A549 (cell line): ENCODE measurements at regions of chr20 and their contacts with region 1.

Region 1: GRCh38 chr20:52083627-52084232 is 107.8 kb downstream of the ZFP64 start:
- DNase-seq: peak; percentile 63 to 69
- ATAC-seq: peak; percentile 79 to 88
- H3K4me3 ChIP-seq: no peak overlapping the region
- H3K27ac ChIP-seq: no peak overlapping the region
- H3K4me1 ChIP-seq: 0 out of 3 replicates have a peak, but pooled peaks cover 3% of the 10 kb centered on the region
- CTCF ChIP-seq: peak; percentile 80
- EP300 ChIP-seq: no peak
- POLR2A ChIP-seq: no peak
- RAD21 ChIP-seq: peak; percentile 93 to 95

Region 2: DNA sequence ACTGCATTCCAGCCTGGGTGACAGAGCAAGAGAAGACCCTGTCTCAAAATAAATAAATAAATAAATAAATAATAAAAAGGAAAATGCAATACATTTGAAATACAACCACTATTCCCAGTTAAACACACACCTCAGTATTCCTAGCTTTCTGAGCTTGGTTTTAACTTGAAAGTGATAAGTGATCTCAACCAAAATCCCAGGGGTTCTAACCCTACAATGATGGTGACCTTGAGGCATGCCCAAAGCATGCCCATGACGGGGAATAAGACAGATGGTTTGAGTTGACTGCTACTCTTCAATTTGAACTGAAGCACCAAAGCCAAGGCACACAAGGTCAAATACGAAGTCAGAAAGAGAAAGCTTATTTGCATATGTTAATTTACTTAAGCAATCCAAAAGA is 11.0 kb after region 1 on chr20:
- CTCF ChIA-PET with region 1: interaction called, 15 read pairs
- POLR2A ChIA-PET with region 1: no interaction called
- DNase-seq: no peak
- ATAC-seq: no peak
- H3K4me3 ChIP-seq: no peak overlapping the region
- H3K27ac ChIP-seq: no peak overlapping the region
- H3K4me1 ChIP-seq: no peaks in the 10 kb centered on the region
- CTCF ChIP-seq: no peak
- EP300 ChIP-seq: no peak
- POLR2A ChIP-seq: no peak
- RAD21 ChIP-seq: no peak

Region 3: DNA sequence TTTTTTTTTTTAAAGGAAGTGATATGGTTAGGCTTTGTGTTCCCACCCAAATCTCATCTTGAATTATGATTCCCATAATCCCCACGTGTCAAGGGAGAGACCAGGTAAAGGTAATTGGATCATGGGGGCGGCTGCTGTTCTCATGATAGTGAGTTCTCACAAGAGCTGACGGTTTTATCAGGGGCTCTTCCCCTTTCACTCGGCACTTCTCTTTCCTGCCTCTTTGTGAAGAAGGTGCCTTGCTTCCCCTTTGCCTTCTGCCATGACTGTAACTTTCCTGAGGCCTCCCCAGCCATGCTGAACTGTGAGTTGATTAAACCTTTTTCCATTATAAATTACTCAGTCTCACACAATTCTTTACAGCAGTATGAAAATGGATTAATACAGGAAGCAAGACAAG is 43.6 kb after region 1 on chr20:
- CTCF ChIA-PET with region 1: no interaction called
- POLR2A ChIA-PET with region 1: no interaction called
- DNase-seq: no peak
- ATAC-seq: no peak
- H3K4me3 ChIP-seq: no peak overlapping the region
- H3K27ac ChIP-seq: no peak overlapping the region
- H3K4me1 ChIP-seq: no peaks in the 10 kb centered on the region
- CTCF ChIP-seq: no peak
- EP300 ChIP-seq: no peak
- POLR2A ChIP-seq: no peak
- RAD21 ChIP-seq: no peak